ENCODE measurements at regions of chr18 and their contacts with region 1.

Region 1: GRCh38 chr18:28065031-28065792 is 111.7 kb downstream of the CDH2 start:
- DNase-seq: no peak
- ATAC-seq: no peak
- H3K4me3 Mint-ChIP-seq: no peak overlapping the region
- H3K27ac Mint-ChIP-seq: no peak overlapping the region
- H3K4me1 Mint-ChIP-seq: no peaks in the 10 kb centered on the region
- H3K27me3 Mint-ChIP-seq: no peaks in the 10 kb centered on the region

Region 2: DNA sequence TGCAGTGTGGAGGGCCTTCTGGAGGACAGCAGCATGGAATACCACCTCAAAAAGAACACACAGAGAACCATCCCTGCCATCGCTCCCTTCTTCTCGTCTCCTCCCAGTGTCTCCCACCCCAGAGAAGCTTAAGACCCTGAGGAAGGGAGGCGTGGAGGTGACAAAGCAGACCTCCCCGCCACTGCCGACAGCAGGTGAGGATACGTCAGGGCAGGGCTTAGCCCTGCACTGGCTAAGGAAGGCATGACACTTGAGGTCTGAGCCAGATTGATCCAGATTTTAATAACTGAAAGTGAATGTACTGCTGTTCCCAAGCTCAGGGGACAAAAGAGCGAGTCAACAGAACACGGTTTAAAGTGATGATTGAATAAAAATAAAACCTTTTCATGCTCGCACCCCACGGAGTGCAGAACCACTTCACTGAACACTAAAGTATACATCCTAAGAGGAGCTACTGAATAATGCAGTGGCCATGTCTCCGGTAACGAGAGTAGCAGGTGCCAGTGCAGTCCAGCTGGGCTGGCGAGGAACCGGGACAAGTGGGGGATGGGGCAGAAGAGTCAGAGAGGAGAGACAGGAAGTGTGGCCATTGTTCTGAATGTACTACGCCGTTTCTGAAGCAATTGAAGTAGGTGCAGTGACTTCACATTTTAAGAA is 279.3 kb before region 1 on chr18:
- CTCF ChIA-PET with region 1: no interaction called
- POLR2A ChIA-PET with region 1: no interaction called
- intact Hi-C with region 1: no loop called
- DNase-seq: no peak
- ATAC-seq: no peak
- H3K4me3 Mint-ChIP-seq: no peak overlapping the region
- H3K27ac Mint-ChIP-seq: no peak overlapping the region
- H3K4me1 Mint-ChIP-seq: no peaks in the 10 kb centered on the region
- H3K27me3 Mint-ChIP-seq: no peaks in the 10 kb centered on the region

Region 3: GRCh38 chr18:28003451-28003850 is 61.8 kb before region 1 on chr18:
- CTCF ChIA-PET with region 1: no interaction called
- POLR2A ChIA-PET with region 1: no interaction called
- intact Hi-C with region 1: no loop called
- DNase-seq: no peak
- ATAC-seq: no peak
- H3K4me3 Mint-ChIP-seq: no peak overlapping the region
- H3K27ac Mint-ChIP-seq: no peak overlapping the region
- H3K4me1 Mint-ChIP-seq: no peaks in the 10 kb centered on the region
- H3K27me3 Mint-ChIP-seq: no peaks in the 10 kb centered on the region

Region 4: DNA sequence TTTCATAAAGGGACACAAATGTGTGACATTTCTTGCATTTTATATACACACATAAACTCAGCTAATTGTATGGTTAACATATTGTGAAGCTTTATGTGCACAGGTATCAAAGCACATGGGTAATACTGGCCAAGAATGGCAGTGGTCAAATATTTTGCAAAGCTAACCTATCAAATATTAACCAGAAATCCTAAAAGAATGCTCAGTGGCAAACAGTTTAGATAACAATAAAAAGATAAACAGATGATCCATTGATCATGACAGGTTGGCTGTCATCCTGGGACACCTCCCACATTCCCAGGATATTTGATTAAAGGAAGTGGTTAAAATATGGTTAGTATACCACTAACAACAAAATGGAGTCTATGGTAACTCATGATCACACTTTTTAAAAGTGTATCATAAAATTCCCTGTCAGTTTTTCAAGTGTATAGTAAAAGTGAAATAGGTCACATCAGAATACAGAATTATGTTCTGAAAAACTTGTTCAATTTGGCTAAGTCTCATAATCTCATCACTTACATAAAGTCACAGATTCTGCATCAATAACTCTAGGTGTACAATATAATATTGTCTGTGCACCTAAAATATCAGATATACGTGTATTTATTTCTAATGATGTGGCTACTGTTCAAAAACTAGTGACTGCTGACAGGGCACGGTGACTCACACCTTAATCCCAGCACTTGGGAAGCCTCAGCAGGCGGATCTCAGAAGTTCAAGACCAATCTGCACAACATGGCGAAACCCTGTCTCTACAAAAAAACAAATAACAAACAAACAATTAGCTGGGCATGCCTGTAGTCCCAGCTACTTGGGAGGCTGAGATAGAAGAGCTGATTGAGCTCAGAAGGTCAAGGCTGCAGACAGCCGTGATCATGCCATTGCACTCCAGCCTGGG is 62.8 kb after region 1 on chr18:
- CTCF ChIA-PET with region 1: no interaction called
- POLR2A ChIA-PET with region 1: no interaction called
- intact Hi-C with region 1: loop called in 1 of 2 experiments (anchors 10 kb)
- DNase-seq: no peak
- ATAC-seq: no peak
- H3K4me3 Mint-ChIP-seq: no peak overlapping the region
- H3K27ac Mint-ChIP-seq: no peak overlapping the region
- H3K4me1 Mint-ChIP-seq: no peaks in the 10 kb centered on the region
- H3K27me3 Mint-ChIP-seq: no peaks in the 10 kb centered on the region

Region 5: DNA sequence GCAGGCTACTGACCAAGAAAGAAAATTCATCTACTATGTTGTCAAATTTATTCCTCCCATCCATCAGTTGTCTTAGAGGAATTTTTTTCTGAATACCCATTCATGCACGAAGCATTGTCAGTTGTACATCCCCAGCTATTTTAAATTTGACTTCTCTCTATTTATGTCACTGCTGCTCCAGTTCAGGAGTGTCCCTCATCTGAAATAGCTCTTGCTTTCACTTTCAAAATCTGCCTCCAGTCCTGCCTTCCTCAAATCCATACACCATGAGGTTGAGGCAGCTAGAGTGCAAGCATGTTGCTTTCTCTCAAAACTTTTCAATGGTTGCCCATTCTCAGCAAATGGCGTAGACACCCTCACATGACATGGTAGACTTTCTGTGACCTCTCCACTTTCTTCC is 447.1 kb after region 1 on chr18:
- CTCF ChIA-PET with region 1: no interaction called
- POLR2A ChIA-PET with region 1: no interaction called
- intact Hi-C with region 1: no loop called
- DNase-seq: no peak
- ATAC-seq: no peak
- H3K4me3 Mint-ChIP-seq: no peak overlapping the region
- H3K27ac Mint-ChIP-seq: no peak overlapping the region
- H3K4me1 Mint-ChIP-seq: no peaks in the 10 kb centered on the region
- H3K27me3 Mint-ChIP-seq: no peaks in the 10 kb centered on the region